Transverse colon (tissue), 4 donors: ENCODE measurements at regions of chr6 and their contacts with region 1.

Region 1: GRCh38 chr6:53171605-53172446 is 23.2 kb upstream of the GCM1 start:
- DNase-seq: peak; percentile 91
- H3K4me3 ChIP-seq: no peak overlapping the region
- H3K27ac ChIP-seq: no peak overlapping the region
- H3K4me1 ChIP-seq: no peaks in the 10 kb centered on the region
- H3K27me3 ChIP-seq: no peaks in the 10 kb centered on the region
- CTCF ChIP-seq: peak; percentile 100
- EP300 ChIP-seq: no peak
- POLR2A ChIP-seq: no peak

Region 2: GRCh38 chr6:52000064-52000463 is 1171.8 kb before region 1 on chr6:
- in situ Hi-C with region 1: no loop called
- intact Hi-C with region 1: loop called (anchors 10 kb)
- DNase-seq: no peak
- H3K4me3 ChIP-seq: no peak overlapping the region
- H3K27ac ChIP-seq: no peak overlapping the region
- H3K4me1 ChIP-seq: peaks cover 0 to 7% (median under 1%) of the 10 kb centered on the region in 4 donors
- H3K27me3 ChIP-seq: no peaks in the 10 kb centered on the region
- CTCF ChIP-seq: no peak
- EP300 ChIP-seq: no peak
- POLR2A ChIP-seq: no peak

Region 3: GRCh38 chr6:53410508-53411258 is 238.9 kb after region 1 on chr6:
- in situ Hi-C with region 1: loop called in 2 of 4 experiments (anchors 10 kb)
- intact Hi-C with region 1: no loop called
- DNase-seq: peak; percentile 29
- H3K4me3 ChIP-seq: no peak overlapping the region
- H3K27ac ChIP-seq: no peak overlapping the region
- H3K4me1 ChIP-seq: no peaks in the 10 kb centered on the region
- H3K27me3 ChIP-seq: no peaks in the 10 kb centered on the region
- CTCF ChIP-seq: peak; percentile 51 to 67 (median 63)
- EP300 ChIP-seq: no peak
- POLR2A ChIP-seq: no peak

Region 4: GRCh38 chr6:53484476-53485280 is 312.9 kb after region 1 on chr6:
- in situ Hi-C with region 1: loop called (anchors 5 to 10 kb)
- intact Hi-C with region 1: loop called (anchors 1 kb)
- DNase-seq: peak; percentile 77
- H3K4me3 ChIP-seq: no peak overlapping the region
- H3K27ac ChIP-seq: peak overlapping the region in 1 of 4 donors; percentile 18
- H3K4me1 ChIP-seq: peaks cover 0 to 8% (median 4%) of the 10 kb centered on the region in 4 donors
- H3K27me3 ChIP-seq: no peaks in the 10 kb centered on the region
- CTCF ChIP-seq: peak; percentile 89 to 98 (median 94)
- EP300 ChIP-seq: no peak
- POLR2A ChIP-seq: no peak

Region 5: DNA sequence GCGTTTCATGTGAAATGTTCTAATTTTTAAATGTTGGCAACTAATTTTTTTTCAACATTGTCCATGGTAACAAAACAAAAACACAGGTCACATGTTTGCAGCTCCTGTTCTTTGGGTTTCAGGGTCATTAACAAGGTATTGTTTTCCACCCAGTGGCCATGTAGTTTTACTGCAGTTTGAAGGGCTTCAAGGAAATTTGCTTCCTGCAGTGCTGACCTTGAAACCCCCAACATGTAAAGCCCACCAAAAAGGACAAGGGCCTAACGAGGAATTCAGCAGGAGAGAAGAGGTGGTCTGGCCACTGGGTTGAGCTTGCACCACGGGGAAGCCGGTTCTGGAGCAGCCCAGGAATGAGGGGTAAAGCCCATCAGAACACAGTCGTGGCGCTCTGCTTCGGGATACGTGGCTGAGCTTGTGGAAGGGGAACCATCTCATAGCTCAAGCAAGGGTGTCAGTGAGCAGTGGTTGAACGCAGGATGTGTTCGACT is 507.7 kb after region 1 on chr6:
- in situ Hi-C with region 1: loop called in 1 of 4 experiments (anchors 25 kb)
- intact Hi-C with region 1: no loop called
- DNase-seq: no peak
- H3K4me3 ChIP-seq: no peak overlapping the region
- H3K27ac ChIP-seq: no peak overlapping the region
- H3K4me1 ChIP-seq: peaks cover 0 to 5% (median 0%) of the 10 kb centered on the region in 4 donors
- H3K27me3 ChIP-seq: no peaks in the 10 kb centered on the region
- CTCF ChIP-seq: peak; percentile 22 to 45 (median 30)
- EP300 ChIP-seq: no peak
- POLR2A ChIP-seq: no peak

Region 6: GRCh38 chr6:53725791-53726431 is 554.1 kb after region 1 on chr6:
- in situ Hi-C with region 1: loop called in 1 of 4 experiments (anchors 25 kb)
- intact Hi-C with region 1: loop called (anchors 5 kb)
- DNase-seq: peak; percentile 82
- H3K4me3 ChIP-seq: no peak overlapping the region
- H3K27ac ChIP-seq: no peak overlapping the region
- H3K4me1 ChIP-seq: peaks cover 0 to 13% (median 0%) of the 10 kb centered on the region in 4 donors
- H3K27me3 ChIP-seq: no peaks in the 10 kb centered on the region
- CTCF ChIP-seq: peak; percentile 90 to 97 (median 94)
- EP300 ChIP-seq: no peak
- POLR2A ChIP-seq: no peak